Aorta (tissue), 5 donors: ENCODE measurements at regions of chr11 and their contacts with region 1.

Region 1: DNA sequence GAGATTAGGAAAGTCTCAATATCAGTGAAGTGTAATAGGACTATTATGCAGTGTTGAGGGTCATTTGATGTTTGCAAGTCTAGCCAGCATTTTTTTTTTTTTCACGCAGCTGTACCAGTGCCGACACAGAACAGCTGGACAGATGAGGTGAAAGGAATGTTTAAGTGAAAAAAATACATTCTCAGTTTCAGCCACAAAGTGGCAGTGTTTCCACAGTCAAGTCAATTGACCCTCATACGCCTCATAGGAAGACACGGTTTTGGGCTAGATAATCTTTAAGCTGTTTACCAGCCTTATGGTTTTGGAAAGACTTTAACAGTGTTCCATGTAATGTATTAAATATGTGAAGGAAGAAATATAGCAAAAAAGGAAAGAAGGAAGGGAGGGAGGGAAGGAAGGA is 349.9 kb upstream of the ANO3 start:
- DNase-seq: no peak
- ATAC-seq: peak; percentile 83
- H3K4me3 ChIP-seq: no peak overlapping the region
- H3K27ac ChIP-seq: no peak overlapping the region
- H3K4me1 ChIP-seq: no peaks in the 10 kb centered on the region
- H3K27me3 ChIP-seq: no peaks in the 10 kb centered on the region

Region 2: GRCh38 chr11:24324211-24324610 is 1657.8 kb before region 1 on chr11:
- intact Hi-C with region 1: no loop called
- DNase-seq: no peak
- ATAC-seq: no peak
- H3K4me3 ChIP-seq: no peak overlapping the region
- H3K27ac ChIP-seq: no peak overlapping the region
- H3K4me1 ChIP-seq: no peaks in the 10 kb centered on the region
- H3K27me3 ChIP-seq: no peaks in the 10 kb centered on the region

Region 3: DNA sequence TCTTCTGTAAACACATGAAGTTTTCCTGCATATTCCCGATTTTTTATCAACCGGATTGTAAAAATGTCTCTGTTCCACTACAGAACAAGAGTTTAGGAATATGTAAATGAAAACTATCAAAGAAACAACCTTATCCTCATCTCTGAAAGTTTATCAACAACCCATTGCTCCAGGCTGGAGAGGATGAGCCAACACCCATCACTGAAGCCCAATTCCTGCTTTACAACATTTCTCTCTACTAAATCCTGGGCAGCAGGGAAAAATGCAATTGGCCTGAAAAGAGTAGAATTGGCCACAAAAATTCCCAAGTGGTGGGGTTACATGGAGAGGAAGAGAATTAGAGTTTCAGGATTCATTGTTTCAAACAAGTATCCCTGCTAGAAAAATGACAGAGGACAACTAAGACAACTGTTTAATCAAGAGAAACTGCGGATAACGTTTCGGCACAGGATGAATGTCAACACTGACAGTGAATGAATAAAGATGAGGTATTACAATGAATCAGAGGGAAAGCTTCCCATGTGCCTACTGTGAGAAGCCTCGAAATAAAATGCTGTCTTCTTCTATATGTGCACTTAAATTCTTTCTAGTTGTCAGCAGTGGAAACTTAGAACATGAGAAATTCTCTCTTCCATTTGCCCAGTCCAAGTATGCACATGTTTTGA is 32.6 kb after region 1 on chr11:
- intact Hi-C with region 1: no loop called
- DNase-seq: no peak
- ATAC-seq: no peak
- H3K4me3 ChIP-seq: no peak overlapping the region
- H3K27ac ChIP-seq: no peak overlapping the region
- H3K4me1 ChIP-seq: no peaks in the 10 kb centered on the region
- H3K27me3 ChIP-seq: no peaks in the 10 kb centered on the region

Region 4: DNA sequence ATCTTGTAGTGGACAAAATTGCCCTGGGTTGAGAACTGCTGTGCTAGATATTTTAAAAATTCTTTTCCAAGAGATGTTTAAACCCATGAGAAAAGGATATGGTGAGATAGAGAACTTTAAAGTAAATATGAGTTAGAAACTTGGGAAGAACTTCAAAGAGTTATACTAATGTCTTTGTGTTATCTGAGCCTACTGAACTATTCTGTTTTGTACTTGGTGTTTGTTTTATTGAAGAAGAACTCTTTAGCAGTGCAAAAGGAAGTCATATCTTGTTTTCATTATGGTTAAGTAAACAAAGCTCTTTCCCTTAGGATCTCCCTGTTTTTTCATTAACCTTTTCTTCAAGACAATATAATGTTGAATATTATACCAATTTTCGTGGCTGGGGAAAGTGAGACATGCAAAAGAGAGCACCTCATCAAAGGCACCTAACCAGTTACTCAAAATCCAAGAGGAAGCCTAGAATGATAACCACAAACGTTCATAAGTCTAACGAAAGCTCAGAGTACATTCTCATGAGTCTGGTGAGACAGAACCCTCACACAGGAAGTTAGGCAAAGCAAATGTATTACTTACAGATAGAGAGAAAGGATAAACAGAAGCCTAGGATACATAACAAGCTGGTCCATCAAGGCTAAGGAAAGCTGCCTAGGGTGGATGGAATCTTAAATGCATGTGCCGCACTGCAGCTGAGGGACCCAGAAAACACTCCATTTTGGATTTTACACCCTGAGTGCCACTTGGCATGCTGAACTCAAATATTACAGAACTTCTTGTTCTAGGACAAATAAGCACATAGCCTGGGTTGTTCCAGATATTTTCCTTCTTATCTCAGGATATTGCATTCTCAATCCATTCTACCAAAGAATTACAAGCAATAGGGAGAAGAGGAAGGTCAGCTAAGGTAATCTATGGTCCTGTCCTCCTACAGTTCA is 237.5 kb after region 1 on chr11:
- intact Hi-C with region 1: loop called in 1 of 2 experiments (anchors 5 kb)
- DNase-seq: no peak
- ATAC-seq: no peak
- H3K4me3 ChIP-seq: no peak overlapping the region
- H3K27ac ChIP-seq: no peak overlapping the region
- H3K4me1 ChIP-seq: no peaks in the 10 kb centered on the region
- H3K27me3 ChIP-seq: no peaks in the 10 kb centered on the region

Region 5: GRCh38 chr11:26227296-26227695 is 245.3 kb after region 1 on chr11:
- intact Hi-C with region 1: loop called (anchors 5 kb)
- DNase-seq: no peak
- ATAC-seq: peak; percentile 75
- H3K4me3 ChIP-seq: no peak overlapping the region
- H3K27ac ChIP-seq: no peak overlapping the region
- H3K4me1 ChIP-seq: no peaks in the 10 kb centered on the region
- H3K27me3 ChIP-seq: no peaks in the 10 kb centered on the region

Region 6: GRCh38 chr11:26276798-26277424 is 294.9 kb after region 1 on chr11:
- intact Hi-C with region 1: loop called (anchors 5 kb)
- DNase-seq: no peak
- ATAC-seq: peak; percentile 74
- H3K4me3 ChIP-seq: no peak overlapping the region
- H3K27ac ChIP-seq: no peak overlapping the region
- H3K4me1 ChIP-seq: no peaks in the 10 kb centered on the region
- H3K27me3 ChIP-seq: no peaks in the 10 kb centered on the region